ENCODE measurements at regions of chr1 and their contacts with region 1.

Region 1: DNA sequence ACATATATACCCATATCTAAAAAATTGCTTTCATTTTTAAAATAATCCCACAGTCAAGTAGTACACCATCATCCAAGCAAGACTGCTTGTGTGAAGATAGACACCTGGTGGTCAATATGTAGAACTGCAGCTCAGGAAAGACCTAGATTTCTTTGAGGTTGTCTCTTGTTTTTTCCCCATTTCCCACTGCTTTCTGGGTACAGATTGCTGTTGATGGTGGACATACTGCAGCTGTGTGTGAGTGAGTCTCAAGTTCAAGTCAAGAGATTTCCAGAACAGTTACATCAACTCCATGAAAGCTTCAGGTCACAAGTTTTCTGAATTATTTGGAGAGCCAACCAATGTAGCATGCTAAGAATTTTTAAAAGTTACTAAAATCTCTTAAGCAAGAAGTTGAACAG is 306.4 kb downstream of the DUSP10 start:
- DNase-seq: no peak
- H3K4me3 Mint-ChIP-seq: no peak overlapping the region
- H3K27ac Mint-ChIP-seq: no peak overlapping the region
- H3K4me1 Mint-ChIP-seq: peaks cover 34% of the 10 kb centered on the region
- H3K27me3 Mint-ChIP-seq: peaks cover 4% of the 10 kb centered on the region

Region 2: DNA sequence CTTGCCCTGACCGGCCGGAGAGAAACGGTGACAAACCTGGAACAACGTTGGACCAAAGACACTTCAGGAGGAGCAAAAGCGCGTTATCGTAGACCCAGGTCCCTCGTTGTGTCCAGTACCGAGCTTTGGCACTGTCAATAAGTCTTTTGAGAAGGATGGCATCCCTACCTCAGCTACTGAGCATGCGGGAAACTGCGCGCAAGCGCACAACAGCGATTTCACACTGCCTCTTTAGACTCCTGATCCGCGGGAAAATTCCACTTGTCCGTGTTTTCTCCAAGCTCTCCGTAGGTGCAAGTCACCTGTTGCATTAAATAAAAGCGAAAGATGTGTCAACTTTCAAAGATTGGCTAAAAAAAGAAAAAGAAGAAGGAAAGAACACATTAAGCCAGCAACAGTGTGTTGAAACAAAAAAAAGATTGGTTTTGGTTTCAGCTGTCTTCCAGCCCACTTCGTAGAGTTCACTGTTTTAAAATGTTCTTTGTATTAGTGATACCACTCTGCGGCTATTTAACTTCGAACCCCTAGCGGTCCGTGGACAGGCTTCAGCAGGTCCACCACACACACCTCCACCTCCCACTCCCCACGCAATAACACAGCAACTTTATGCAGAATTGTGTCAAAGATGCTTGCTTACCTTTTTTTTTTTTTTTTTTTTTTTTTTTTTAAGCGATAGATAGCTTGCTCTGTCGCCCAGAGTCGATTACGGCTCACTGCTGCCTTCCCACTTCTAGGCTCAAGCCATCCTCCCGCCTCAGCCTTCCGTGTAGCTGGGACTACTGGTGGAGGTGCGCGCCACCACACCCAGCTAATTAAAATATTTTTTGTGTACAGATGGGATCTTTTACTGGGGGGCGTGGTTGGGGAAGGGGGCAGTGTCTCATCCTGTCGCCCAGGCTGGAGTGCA is 1345.6 kb before region 1 on chr1 and contains the start of gene BPNT1:
- CTCF ChIA-PET with region 1: no interaction called
- intact Hi-C with region 1: loop called (anchors 10 kb)
- DNase-seq: peak; percentile 100
- H3K4me3 Mint-ChIP-seq: peak within 1 kb of the TSS; percentile 91
- H3K27ac Mint-ChIP-seq: peak within 1 kb of the TSS; percentile 85
- H3K4me1 Mint-ChIP-seq: peaks cover 12% of the 10 kb centered on the region
- H3K27me3 Mint-ChIP-seq: no peaks in the 10 kb centered on the region
- total RNA-seq, gene BPNT1: 18.5 to 21.3 TPM

Region 3: GRCh38 chr1:220879076-220879508 is 556.4 kb before region 1 on chr1 and contains the start of gene HLX:
- CTCF ChIA-PET with region 1: no interaction called
- intact Hi-C with region 1: loop called (anchors 1 kb)
- DNase-seq: peak; percentile 31
- H3K4me3 Mint-ChIP-seq: peak within 1 kb of the TSS; percentile 63
- H3K27ac Mint-ChIP-seq: no peak within 1 kb of the TSS
- H3K4me1 Mint-ChIP-seq: peaks cover 37% of the 10 kb centered on the region
- H3K27me3 Mint-ChIP-seq: peaks cover 73% of the 10 kb centered on the region
- total RNA-seq, gene HLX: 0.12 TPM in 1 of 2 experiments, not detected in the other

Region 4: DNA sequence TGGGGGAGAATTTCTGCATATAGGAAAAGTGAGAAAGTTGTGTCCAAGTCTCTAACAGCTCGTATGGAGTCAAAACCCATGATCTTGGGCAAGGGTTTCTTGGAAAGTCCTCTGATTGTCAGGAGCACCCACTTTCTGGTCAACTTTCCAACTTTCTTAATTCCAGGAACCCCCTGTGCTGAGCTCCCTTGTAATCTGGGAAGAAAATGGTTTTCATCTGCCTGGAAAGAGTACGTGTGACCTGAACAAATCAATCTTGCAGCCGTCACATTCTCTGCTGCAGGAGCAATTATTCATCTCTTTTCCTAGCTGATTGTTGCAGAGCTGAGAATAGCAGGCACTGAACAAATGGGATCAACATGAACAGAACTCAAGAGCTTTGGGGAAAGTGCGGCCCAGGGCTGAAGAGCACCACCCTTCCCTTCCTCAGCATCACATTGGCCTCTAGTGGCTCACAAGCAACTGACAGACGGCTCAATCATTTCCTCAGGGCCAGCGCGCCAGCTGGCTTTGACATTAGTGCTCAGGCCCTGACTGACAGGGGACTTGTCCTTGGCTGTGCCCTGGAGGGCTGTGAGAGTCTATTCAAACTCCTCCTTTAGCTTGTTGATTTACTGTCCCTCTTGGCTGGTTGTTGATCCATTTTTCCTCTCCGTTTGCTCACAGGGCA is 261.0 kb before region 1 on chr1:
- CTCF ChIA-PET with region 1: no interaction called
- intact Hi-C with region 1: no loop called
- DNase-seq: no peak
- H3K4me3 Mint-ChIP-seq: no peak overlapping the region
- H3K27ac Mint-ChIP-seq: no peak overlapping the region
- H3K4me1 Mint-ChIP-seq: no peaks in the 10 kb centered on the region
- H3K27me3 Mint-ChIP-seq: peaks cover 5% of the 10 kb centered on the region

Region 5: DNA sequence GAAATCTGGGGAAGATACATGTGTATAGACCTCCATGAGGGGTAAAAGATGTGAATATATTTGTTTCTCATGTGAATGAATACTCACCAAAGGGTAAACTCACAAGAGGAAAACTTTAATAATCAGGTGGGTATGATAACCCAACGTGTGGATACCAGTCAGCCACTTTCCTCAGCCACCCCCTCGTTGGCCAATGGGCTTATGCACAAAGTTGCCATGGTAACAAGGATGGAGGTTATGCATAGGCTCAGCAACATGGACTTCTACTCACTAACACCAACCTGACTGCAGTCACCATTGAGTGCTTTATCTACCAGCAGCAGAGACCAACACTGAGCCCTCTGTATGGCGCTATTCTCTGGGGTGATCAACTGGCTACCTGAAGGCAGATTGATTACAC is 118.0 kb before region 1 on chr1:
- CTCF ChIA-PET with region 1: no interaction called
- intact Hi-C with region 1: no loop called
- DNase-seq: no peak
- H3K4me3 Mint-ChIP-seq: no peak overlapping the region
- H3K27ac Mint-ChIP-seq: no peak overlapping the region
- H3K4me1 Mint-ChIP-seq: no peaks in the 10 kb centered on the region
- H3K27me3 Mint-ChIP-seq: peaks cover 7% of the 10 kb centered on the region

Region 6: DNA sequence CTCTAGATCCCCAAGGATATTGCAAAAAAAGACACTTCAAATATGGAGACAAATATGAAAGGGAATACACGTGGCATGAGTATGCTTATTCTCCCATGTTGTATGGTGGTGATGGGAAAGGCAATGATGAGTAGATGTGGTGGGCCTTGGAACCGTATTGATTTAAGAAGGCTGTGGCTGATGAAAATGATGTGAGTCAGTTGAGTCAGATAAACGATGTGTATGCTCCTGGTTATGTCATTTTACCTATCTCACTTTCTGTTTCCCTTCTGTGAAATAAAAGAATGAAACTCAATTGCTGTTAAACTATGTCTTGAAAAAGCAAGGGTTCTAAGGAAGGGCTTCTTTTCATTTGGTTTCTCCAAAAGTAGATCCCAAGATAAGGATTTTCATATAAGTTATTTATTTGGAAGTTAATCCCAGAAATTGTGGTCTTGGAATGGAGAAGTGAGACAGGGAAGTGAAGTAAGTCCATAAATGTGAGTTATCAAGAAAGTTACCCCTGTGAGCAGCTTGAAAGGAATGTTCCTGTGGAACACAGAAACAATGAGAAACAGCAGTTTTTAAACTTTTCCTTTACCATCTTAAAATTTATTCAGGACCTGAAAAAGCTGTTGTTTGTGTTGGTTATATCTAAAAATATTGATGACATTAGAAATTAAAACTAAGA is 14.4 kb after region 1 on chr1:
- CTCF ChIA-PET with region 1: interaction called, 18 read pairs
- intact Hi-C with region 1: loop called (anchors 1 kb)
- DNase-seq: peak; percentile 29
- H3K4me3 Mint-ChIP-seq: no peak overlapping the region
- H3K27ac Mint-ChIP-seq: peak overlapping the region; percentile 6
- H3K4me1 Mint-ChIP-seq: peaks cover 13% of the 10 kb centered on the region
- H3K27me3 Mint-ChIP-seq: peaks cover 15% of the 10 kb centered on the region

Region 7: DNA sequence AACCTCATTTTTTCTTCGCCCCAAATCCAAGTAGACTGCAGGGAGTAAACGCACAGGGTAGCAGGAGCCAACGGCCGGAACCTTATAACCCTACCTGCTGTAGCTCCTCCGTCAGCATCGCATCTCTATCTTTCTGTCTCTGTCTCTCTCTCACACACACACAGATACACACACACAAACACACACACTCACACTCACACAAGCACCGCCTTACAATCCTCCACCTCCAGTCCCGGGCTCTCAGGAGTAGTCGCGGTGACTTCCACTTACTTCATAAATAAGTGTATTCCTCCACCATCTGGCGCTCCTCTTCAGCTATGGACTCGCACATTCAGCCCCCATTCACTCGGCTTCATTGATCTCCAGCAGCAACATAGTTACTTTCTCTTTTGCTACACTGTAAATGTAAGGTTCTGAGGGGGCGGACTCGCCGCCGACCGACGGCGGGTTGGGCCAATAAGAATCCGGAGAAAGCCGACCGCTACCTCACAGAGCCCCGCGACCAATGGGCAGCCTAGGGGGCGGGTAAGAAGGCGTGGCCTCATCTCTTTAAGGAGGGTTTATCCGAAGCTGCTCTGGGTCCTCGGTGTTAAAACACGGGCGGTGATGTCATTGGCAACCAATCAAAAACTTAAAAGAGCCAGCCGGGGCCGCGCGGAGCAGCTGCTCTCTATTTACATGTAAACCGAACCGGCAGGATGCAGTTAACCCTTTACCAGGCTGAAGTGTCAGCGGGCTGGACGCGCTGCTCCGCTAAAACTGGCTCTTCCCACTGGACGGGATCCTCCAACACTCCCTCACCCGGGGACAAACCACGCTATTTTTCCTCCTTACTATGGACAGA is 306.4 kb after region 1 on chr1 and contains the start of gene DUSP10:
- CTCF ChIA-PET with region 1: no interaction called
- intact Hi-C with region 1: loop called (anchors 1 kb)
- DNase-seq: peak; percentile 99
- H3K4me3 Mint-ChIP-seq: no peak within 1 kb of the TSS
- H3K27ac Mint-ChIP-seq: peak within 1 kb of the TSS; percentile 48
- H3K4me1 Mint-ChIP-seq: peaks cover 33% of the 10 kb centered on the region
- H3K27me3 Mint-ChIP-seq: no peaks in the 10 kb centered on the region
- total RNA-seq, gene DUSP10: 9.1 TPM

Region 8: GRCh38 chr1:221829327-221830015 is 394.0 kb after region 1 on chr1:
- CTCF ChIA-PET with region 1: no interaction called
- intact Hi-C with region 1: loop called (anchors 1 kb)
- DNase-seq: peak; percentile 83
- H3K4me3 Mint-ChIP-seq: peak overlapping the region; percentile 14
- H3K27ac Mint-ChIP-seq: peak overlapping the region; percentile 83
- H3K4me1 Mint-ChIP-seq: peaks cover 45% of the 10 kb centered on the region
- H3K27me3 Mint-ChIP-seq: no peaks in the 10 kb centered on the region

Region 9: DNA sequence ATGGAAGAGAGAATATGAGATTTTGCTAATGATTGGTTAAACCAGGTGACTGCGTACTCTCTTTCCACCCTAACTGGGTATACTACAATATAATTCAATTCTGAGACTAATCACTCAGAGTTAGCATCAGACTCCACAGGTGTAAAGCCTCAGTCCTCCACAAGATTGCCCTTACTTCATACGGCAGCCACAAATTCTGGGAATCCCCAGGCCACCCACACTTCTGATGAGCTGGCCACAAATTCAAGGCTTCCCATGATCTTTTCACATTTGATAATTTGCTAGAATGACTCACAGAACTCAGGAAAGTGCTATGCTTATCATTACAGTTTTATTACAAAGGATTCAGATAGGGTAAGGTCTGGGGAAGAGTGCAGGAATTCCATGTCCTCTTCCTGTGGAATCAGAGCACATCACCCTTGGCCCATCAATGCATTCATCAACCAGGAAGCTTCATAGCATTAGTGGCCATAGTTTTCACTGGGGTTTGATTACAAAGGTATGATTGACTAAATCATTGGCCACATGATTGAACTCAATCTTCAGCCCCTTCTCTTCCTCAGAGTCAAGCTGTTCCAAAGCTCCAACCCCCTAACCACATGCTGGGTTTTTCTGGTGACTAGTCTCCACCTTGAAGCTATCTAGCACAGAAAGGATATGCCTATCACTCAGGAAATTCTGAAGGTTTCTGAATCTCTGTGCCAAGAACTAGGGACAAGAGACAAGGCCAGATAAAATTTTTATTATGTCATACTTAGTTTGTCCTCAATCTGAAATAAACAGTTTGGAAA is 980.7 kb after region 1 on chr1:
- CTCF ChIA-PET with region 1: no interaction called
- intact Hi-C with region 1: loop called (anchors 5 kb)
- DNase-seq: peak; percentile 69
- H3K4me3 Mint-ChIP-seq: no peak overlapping the region
- H3K27ac Mint-ChIP-seq: no peak overlapping the region
- H3K4me1 Mint-ChIP-seq: peaks cover 59% of the 10 kb centered on the region
- H3K27me3 Mint-ChIP-seq: no peaks in the 10 kb centered on the region

Measured in activated naive CD4-positive, alpha-beta T cell treated with anti-CD3 and anti-CD28 coated beads for 36 hours (primary cell).